ENCODE measurements at regions of chr1 and their contacts with region 1.

Region 1: DNA sequence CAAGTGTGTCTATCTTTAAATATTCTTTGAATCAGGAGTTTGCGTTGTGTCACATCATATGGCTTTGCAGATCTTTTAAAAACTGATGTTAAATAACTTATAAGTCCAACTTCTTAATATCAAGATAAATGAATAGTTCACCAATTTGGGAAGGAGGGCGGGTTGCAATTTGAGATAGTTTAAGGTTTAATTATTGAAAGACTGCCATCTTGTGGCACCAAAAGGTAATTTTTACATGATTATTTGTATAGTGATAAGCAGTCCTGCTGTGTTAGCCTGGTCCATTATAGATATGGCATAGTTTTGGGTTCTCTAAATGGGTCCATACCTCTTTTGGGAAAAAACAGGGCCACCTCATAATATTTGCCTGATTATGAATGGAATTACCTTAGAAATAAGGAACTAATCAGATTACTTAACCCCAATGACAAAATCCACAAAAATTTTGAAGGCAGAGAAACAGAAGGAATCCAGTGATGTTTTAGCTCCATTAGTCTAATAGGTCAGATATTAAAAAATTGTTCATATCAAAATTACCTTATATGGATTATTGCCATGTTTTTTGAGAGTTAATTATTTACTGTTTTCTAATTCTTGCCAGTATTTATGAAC is 64.3 kb downstream of the PRKAA2 start:
- DNase-seq: no peak
- ATAC-seq: peak; percentile 68 to 73
- H3K4me3 ChIP-seq: no peak overlapping the region
- H3K27ac ChIP-seq: no peak overlapping the region
- H3K4me1 ChIP-seq: no peaks in the 10 kb centered on the region
- H3K27me3 ChIP-seq: no peaks in the 10 kb centered on the region

Region 2: DNA sequence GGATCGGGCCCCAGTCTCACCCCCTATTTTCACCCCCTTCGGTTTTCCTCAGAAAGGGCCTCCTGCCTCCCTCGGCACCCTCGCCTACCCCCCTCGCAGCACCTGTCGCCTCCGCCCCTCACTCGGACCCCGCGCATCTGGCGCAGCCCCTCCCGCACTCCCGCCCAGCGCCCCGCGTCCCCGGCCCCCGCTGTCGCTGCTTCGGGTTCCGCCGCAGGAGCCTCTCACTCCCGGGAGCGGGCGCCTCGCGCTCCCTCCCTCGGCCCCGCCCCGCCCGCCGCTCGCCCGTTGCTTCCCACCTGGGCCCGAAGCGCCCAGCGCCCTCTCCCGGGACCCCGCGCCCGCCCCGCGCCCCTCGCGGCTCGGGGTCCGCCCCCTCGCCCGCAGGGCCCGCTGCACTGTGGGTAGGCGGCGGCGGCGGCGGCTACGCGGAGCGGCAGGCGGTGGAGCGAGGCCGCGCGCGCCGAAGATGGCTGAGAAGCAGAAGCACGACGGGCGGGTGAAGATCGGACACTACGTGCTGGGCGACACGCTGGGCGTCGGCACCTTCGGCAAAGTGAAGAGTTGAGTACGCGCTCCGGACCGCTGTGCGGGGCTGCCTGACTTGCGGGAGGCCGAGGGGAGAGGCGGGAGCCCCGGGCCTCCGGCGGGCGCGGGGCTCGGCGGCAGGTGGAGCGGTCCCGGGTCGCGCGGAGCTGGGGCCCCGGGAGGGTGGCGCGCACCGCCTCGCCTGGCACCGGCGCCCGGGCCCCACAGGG is 64.3 kb before region 1 on chr1 and contains the start of gene PRKAA2:
- intact Hi-C with region 1: loop called in 1 of 4 experiments (anchors 10 kb)
- DNase-seq: peak; percentile 56 to 83 (median 79)
- ATAC-seq: peak; percentile 87 to 90
- H3K4me3 ChIP-seq: peak within 1 kb of the TSS; percentile 56
- H3K27ac ChIP-seq: peak within 1 kb of the TSS; percentile 90
- H3K4me1 ChIP-seq: no peaks in the 10 kb centered on the region
- H3K27me3 ChIP-seq: no peaks in the 10 kb centered on the region
- total RNA-seq, gene PRKAA2: 65.9 to 91.7 (median 69.9) TPM

Region 3: DNA sequence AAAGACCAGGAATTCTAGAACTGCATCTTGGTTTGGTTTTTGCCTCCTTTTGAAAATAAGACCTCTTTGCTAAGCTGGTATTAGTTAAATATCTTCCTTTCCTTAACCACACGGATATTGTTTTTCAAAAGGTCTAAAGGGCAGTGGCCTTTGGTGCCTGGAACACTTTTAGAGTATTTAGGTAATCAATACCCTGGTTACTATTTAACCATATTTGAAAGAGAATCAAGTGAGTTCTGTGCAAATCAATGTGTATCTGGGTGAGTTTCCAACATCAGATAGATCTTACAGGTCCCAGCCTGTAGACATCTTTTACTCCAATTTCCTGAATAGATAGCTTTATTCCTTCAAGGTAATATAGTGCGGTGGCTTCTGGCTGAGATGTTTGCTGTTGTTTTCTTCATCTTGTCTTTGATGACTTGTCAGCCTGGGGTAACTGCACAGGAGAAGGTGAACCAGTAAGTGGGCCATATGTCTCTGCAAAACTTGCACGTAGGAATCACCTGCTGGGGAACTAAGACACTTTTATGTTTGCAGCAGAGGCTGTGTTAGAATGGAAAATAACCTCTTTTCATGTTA is 145.2 kb after region 1 on chr1 and contains the start of gene C8A:
- intact Hi-C with region 1: no loop called
- DNase-seq: no peak
- ATAC-seq: no peak
- H3K4me3 ChIP-seq: no peak within 1 kb of the TSS
- H3K27ac ChIP-seq: no peak within 1 kb of the TSS
- H3K4me1 ChIP-seq: no peaks in the 10 kb centered on the region
- H3K27me3 ChIP-seq: no peaks in the 10 kb centered on the region
- total RNA-seq, gene C8A: not detected

Measured in right cardiac atrium (tissue), 5 donors.